Aorta (tissue), 5 donors: ENCODE measurements at regions of chr2 and their contacts with region 1.

Region 1: GRCh38 chr2:1268034-1268433 is 145.2 kb upstream of the TPO start:
- DNase-seq: no peak
- ATAC-seq: no peak
- H3K4me3 ChIP-seq: no peak overlapping the region
- H3K27ac ChIP-seq: no peak overlapping the region
- H3K4me1 ChIP-seq: no peaks in the 10 kb centered on the region
- H3K27me3 ChIP-seq: no peaks in the 10 kb centered on the region

Region 2: GRCh38 chr2:1527153-1527992 is 259.3 kb after region 1 on chr2:
- intact Hi-C with region 1: loop called in 1 of 2 experiments (anchors 5 kb)
- DNase-seq: no peak
- ATAC-seq: peak; percentile 69
- H3K4me3 ChIP-seq: no peak overlapping the region
- H3K27ac ChIP-seq: no peak overlapping the region
- H3K4me1 ChIP-seq: no peaks in the 10 kb centered on the region
- H3K27me3 ChIP-seq: no peaks in the 10 kb centered on the region